PC-3 (cell line): ENCODE measurements at regions of chr15 and their contacts with region 1.

Region 1: DNA sequence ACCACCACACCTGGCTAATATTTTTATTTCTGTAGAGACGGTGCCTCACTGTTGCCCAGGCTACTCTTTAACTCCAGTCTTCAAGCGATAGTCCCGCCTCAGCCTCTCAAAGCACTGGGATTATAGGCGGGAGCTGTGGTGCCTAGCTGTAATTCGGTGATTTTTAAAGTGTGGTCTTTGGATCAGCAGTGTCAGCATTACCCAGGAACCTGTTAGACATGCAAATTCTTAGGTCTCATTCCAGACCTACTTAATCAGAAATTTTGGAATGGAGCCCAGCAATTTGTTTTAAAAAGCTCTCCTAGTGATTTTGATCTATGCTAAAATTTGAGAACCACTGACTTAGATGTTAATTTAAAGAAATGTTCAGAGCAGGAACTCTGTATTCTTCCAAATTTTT is 51.9 kb downstream of the GOLM2 start:
- DNase-seq: peak; percentile 95
- ATAC-seq: peak; percentile 100
- H3K4me3 ChIP-seq: no peak overlapping the region
- H3K27ac ChIP-seq: no peak overlapping the region
- H3K4me1 ChIP-seq: peaks cover 11% of the 10 kb centered on the region
- H3K27me3 ChIP-seq: no peaks in the 10 kb centered on the region
- CTCF ChIP-seq: no peak

Region 2: DNA sequence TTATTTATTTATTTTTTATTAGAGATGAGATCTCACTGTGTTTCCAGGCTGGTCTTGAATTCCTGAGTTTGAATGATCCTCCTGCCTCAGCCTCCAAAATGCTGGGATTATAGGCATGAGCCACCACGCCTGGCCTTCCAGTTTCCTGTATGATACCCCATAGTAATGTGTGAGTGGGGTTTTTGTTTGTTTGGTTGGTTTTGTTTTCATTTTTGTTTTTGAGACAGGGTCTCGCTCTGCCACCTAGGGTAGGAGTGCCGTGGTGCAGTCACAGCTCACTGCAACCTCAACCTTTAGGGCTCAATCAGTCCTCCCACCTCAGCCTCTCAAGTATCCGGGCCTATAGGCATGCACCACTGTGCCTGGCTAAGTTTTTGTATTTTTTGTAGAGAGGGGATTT is 21.0 kb before region 1 on chr15:
- CTCF ChIA-PET with region 1: no interaction called
- POLR2A ChIA-PET with region 1: interaction called, 16 read pairs
- intact Hi-C with region 1: no loop called
- DNase-seq: no peak
- ATAC-seq: no peak
- H3K4me3 ChIP-seq: no peak overlapping the region
- H3K27ac ChIP-seq: no peak overlapping the region
- H3K4me1 ChIP-seq: no peaks in the 10 kb centered on the region
- H3K27me3 ChIP-seq: no peaks in the 10 kb centered on the region
- CTCF ChIP-seq: 0 out of 2 replicates have a peak, but pooled peaks have one; percentile 21

Region 3: GRCh38 chr15:44654858-44655257 is 314.4 kb after region 1 on chr15:
- CTCF ChIA-PET with region 1: no interaction called
- POLR2A ChIA-PET with region 1: no interaction called
- intact Hi-C with region 1: no loop called
- DNase-seq: no peak
- ATAC-seq: no peak
- H3K4me3 ChIP-seq: no peak overlapping the region
- H3K27ac ChIP-seq: no peak overlapping the region
- H3K4me1 ChIP-seq: no peaks in the 10 kb centered on the region
- H3K27me3 ChIP-seq: no peaks in the 10 kb centered on the region
- CTCF ChIP-seq: no peak